ENCODE measurements at regions of chr17 and their contacts with region 1.

Region 1: DNA sequence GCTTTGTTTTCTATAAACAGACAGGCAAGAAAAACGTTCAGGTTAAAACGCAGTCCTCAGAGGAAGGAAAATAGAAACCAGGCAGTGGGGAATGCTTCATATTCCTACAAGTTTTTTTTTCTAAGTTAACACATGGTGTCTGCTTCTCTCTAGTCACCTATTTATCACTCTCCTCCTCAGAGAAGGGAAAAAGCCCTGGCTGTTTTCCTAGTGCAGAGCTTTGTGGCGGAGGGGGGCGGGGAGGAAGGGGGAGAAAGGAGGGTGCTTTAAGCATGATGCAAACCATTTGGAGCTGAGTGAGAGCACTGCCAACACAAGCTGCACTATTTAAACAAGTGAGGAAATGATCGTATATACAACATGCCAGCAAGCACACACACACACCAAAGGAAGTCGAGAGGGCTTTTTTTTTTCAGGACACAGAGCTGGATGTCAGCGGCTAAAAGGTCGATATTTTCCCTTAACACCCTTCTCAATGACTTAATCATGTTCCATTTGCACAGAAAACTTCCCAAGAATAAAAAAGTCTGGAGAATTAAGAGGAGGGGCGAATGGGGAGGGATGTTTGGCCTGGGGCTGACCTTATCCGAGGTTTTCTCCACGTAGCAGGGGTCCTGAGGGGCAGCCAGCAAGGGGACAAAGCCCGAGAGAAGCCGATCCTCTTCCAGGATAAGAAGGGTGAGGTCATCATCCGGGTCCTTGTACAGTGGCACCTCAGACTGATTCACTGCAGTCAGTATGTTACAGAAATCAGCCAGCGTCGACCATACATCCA is 117.4 kb downstream of the HIC1 start:
- DNase-seq: peak; percentile 40
- ATAC-seq: peak; percentile 87
- H3K4me3 ChIP-seq: peak overlapping the region; percentile 25; the same call in 1 of the 2 replicates
- H3K27ac ChIP-seq: peak overlapping the region; percentile 70
- H3K4me1 ChIP-seq: peaks cover 15% of the 10 kb centered on the region
- H3K27me3 ChIP-seq: no peaks in the 10 kb centered on the region
- CTCF ChIP-seq: no peak

Region 2: DNA sequence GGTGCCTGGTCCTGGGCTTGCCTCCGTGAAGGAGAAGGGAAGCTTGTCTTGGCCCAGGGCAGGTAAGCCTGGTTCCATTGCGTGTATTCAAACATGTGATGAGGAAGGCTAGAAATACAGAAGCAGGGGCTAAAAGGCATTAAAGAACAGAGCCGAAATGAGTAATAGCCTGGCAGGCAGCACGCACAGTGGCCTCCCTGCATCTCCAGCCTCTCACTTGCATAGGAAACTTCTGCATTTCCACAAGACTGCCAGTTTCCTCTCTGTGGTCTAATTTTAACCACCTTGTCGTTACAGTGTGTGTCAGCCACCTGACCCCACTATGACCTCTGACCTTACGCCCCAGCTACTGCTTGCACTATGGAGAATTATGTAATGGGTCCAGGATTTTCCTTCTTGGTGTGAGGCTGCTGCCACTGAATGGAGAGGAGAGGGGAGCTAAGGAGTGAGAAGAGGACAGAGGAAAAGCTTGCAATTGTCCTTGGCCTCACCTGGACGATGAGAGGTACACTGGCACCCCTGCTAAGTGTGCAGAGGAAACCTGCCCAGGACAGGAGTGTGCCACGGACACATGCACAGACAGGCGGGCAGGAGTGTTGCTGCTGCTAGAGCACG is 84.6 kb before region 1 on chr17:
- CTCF ChIA-PET with region 1: interaction called, 3 read pairs
- POLR2A ChIA-PET with region 1: no interaction called
- intact Hi-C with region 1: loop called (anchors 10 kb)
- DNase-seq: no peak
- ATAC-seq: no peak
- H3K4me3 ChIP-seq: no peak overlapping the region
- H3K27ac ChIP-seq: no peak overlapping the region
- H3K4me1 ChIP-seq: peaks cover 34% of the 10 kb centered on the region
- H3K27me3 ChIP-seq: no peaks in the 10 kb centered on the region
- CTCF ChIP-seq: no peak

Region 3: GRCh38 chr17:2102931-2103809 is 69.1 kb before region 1 on chr17:
- CTCF ChIA-PET with region 1: no interaction called
- POLR2A ChIA-PET with region 1: interaction called, 10 read pairs
- intact Hi-C with region 1: no loop called
- DNase-seq: peak; percentile 83
- ATAC-seq: peak; percentile 70
- H3K4me3 ChIP-seq: no peak overlapping the region
- H3K27ac ChIP-seq: peak overlapping the region; percentile 47
- H3K4me1 ChIP-seq: peaks cover 26% of the 10 kb centered on the region
- H3K27me3 ChIP-seq: no peaks in the 10 kb centered on the region
- CTCF ChIP-seq: no peak

Region 4: GRCh38 chr17:2230877-2231276 is 58.6 kb after region 1 on chr17:
- CTCF ChIA-PET with region 1: no interaction called
- POLR2A ChIA-PET with region 1: no interaction called
- intact Hi-C with region 1: loop called (anchors 1 kb)
- DNase-seq: no peak
- ATAC-seq: no peak
- H3K4me3 ChIP-seq: no peak overlapping the region
- H3K27ac ChIP-seq: no peak overlapping the region
- H3K4me1 ChIP-seq: no peaks in the 10 kb centered on the region
- H3K27me3 ChIP-seq: no peaks in the 10 kb centered on the region
- CTCF ChIP-seq: no peak